BJ (cell line): ENCODE measurements at regions of chr19 and their contacts with region 1.

Region 1: DNA sequence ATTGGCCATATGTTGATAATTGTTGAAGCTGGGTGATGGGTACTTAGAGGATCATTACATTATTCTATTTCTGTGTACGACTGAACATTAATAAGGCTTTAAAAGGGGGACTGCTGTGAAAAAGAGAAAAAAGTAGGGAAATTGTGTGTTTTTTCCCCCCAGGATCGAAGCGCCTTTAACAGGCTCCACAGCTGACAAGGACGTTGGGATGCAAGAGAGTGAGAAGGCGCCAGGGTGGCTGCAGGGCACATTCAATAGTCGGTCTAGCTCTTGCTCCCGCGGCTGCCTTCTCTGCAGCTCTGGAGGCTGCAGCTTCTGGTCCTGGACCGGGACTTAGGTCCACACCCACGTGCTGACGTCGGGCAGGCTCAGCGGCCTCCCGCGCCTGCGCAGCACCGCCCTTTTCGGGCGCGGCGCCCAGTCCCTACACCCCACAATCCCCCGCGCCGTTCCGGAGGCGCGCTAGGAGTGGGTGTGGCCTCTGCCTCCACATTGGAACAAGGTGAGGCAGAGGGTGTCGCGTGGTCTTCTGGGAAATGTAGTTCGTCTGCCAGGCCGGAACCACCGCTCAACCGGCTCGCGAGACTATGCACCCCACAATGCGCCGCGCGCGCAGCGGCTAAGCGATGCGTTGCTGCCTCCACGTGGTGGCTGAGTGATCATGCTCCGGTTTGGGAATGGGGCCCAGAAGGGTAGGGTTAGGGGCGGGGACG is 4.9 kb upstream of the LRFN3 start:
- DNase-seq: peak; percentile 98
- H3K4me3 ChIP-seq: peak overlapping the region; percentile 18; the same call in 1 of the 2 replicates
- H3K27me3 ChIP-seq: no peaks in the 10 kb centered on the region
- CTCF ChIP-seq: peak; percentile 91

Region 2: DNA sequence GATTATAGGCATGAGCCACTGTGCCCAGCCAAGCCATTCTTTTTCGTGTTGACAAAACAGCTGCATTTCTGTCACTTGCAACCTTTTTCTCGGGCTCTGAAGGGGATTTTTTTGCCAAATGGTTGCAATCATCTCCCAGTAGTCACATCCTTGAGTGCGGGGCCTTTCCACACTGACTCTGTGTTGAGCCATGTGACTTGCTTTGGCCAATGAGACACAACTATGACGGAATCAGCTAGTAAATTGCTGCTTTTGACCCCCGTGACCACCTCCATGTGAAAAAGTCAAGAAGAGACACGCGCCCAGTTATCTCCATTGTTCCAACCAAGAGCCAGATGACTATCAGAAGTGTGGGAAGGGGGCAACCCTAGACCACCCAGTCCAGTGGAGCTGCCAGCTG is 97.3 kb before region 1 on chr19:
- CTCF ChIA-PET with region 1: no interaction called
- POLR2A ChIA-PET with region 1: no interaction called
- DNase-seq: no peak
- H3K4me3 ChIP-seq: no peak overlapping the region
- H3K27me3 ChIP-seq: peaks cover 2% of the 10 kb centered on the region; the same call in 1 of the 2 replicates
- CTCF ChIP-seq: no peak

Region 3: DNA sequence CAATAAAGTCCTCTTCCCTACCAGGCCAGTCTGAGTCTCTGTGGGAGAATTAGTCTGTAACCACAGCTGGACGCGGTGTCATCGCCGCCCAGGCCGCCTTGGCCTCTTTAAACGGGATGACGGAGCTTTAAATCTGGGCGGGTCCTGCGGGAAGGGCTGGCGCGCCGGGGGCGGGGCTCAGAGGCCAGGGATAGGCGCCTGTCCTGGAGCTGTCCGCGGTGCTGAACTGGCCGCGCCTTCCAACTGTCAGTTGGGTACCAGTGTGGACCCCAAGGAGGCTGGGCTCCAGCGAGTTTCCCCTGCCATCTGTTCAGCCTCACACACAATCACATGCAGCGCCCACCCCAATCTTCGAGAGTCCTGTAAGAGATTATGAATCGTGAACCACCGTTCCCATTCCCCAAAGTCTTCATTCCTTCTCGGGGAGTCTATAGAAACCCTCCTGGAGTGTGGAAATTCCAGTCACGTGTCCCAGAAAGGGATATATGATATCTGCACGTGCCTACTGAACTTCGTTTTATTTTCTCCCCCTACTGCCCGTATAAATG is 51.5 kb before region 1 on chr19:
- CTCF ChIA-PET with region 1: interaction called, 82 read pairs
- POLR2A ChIA-PET with region 1: interaction called, 3 read pairs
- DNase-seq: peak; percentile 62
- H3K4me3 ChIP-seq: no peak overlapping the region
- H3K27me3 ChIP-seq: no peaks in the 10 kb centered on the region
- CTCF ChIP-seq: no peak

Region 4: DNA sequence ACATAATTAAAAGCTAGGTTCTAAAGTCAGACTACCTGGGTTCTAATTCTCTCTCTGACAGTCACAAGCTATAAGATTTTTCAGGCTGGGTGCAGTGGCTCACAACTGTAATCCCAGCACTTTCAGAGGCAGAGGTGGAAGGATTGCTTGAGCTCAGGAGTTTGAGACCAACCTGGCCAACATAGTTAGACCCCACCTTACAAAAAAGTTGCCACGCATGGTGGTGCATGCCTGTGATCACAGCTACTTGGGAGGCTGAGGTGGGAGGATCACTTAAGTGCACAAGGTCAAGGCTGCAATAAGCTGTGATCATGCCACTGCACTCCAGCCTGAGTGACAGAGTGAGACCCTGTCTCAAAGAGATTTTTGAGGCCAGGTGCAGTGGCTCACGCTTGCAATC is 37.0 kb before region 1 on chr19:
- CTCF ChIA-PET with region 1: interaction called, 18 read pairs
- POLR2A ChIA-PET with region 1: interaction called, 3 read pairs
- DNase-seq: no peak
- H3K4me3 ChIP-seq: no peak overlapping the region
- H3K27me3 ChIP-seq: no peaks in the 10 kb centered on the region
- CTCF ChIP-seq: no peak